ENCODE measurements at regions of chr9 and their contacts with region 1.

Region 1: DNA sequence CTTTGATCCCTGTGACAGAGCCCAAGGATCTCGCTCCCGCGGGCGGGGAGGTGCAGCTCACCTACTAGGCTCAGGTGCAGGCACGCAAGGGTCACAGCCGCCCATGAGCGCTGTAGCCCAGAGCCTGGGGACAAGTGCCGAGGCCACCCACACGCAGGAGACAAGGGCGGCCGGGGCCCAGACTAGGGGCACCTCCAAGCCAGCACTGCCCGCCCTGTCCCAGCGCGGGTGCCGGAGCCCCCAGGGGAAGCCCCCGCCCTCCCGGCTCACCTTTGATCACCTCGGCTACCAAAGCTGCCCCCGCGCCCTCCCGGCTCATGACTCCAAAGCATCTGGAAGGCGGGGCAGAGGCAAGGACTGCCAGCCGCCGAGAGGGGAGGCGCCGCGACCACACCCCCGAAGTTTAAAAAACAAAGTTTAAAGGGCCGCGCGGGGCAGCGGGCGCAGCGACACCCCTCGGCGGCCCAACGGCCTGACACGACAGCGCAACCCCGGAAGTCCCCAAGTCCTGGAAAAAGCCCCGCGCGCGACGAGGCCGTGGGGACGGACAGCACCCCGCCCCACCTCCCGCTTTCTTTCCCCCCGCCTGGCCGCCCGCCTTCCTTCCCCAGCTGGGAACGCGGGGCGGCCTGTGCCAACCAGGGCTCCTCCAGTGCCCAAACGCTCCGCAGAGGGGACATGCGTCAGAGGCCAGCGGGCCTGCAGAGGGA is 53.0 kb downstream of the CDC14B start:
- DNase-seq: peak; percentile 67
- H3K4me3 Mint-ChIP-seq: peak overlapping the region; percentile 79
- H3K27ac Mint-ChIP-seq: peak overlapping the region; percentile 72
- H3K4me1 Mint-ChIP-seq: peaks cover 26% of the 10 kb centered on the region
- H3K27me3 Mint-ChIP-seq: peaks cover 14% of the 10 kb centered on the region

Region 2: DNA sequence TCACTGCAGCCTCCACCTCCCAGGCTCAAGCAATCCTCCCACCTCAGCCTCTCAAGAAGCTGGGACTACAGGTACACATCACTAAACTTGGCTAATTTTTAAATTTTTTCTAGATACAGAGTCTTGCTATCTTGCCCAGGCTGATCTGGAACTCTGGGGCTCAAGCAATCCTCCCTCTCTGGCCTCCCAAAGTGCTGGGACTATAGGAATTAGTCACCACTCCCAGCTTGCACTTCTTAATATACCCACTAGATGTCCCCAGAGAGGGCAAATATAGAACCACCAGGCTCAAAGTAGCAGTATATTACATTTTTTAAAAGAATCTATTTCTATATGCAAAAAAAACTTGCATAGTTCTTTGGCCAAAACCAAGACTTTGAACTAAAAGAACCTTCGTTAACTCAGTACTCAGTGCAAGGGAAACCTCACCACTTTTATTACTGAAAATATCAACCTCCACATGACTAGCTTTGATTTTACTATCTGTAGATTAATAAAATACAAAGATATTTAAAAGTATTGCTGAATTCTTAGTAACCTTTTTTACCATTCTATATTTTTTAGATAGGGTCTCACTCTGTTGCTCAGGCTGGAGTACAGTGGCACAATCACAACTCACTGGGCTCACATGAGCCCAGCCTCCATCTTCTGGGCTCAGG is 238.8 kb before region 1 on chr9:
- intact Hi-C with region 1: loop called (anchors 2 kb)
- DNase-seq: peak; percentile 6
- H3K4me3 Mint-ChIP-seq: no peak overlapping the region
- H3K27ac Mint-ChIP-seq: no peak overlapping the region
- H3K4me1 Mint-ChIP-seq: no peaks in the 10 kb centered on the region
- H3K27me3 Mint-ChIP-seq: peaks cover 5% of the 10 kb centered on the region

Region 3: DNA sequence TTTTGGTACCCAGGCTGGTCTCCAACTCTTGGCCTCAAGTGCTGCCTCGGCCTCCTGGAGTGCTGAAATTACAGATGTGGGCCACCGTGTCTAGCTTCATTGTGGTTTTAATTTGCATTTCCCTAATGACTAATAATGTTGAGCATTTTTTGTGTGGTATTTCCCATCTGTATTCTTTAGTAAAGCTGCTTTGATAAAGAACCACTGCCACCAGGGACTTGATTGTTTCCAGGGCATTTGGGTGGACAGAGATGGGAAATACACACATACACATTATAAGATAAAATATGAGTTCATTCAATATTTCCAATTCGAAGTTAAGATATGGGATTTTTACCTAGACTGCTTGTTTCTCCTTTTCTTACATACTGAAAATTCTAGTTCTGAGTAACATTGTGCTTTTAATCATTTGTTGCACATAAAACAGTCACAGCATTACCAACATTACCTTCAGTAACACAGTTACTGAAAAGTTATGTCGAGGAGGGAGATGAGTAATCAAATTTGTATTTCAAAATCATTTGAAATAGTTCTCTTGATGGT is 87.8 kb before region 1 on chr9:
- intact Hi-C with region 1: loop called (anchors 1 kb)
- DNase-seq: no peak
- H3K4me3 Mint-ChIP-seq: no peak overlapping the region
- H3K27ac Mint-ChIP-seq: peak overlapping the region; percentile 50
- H3K4me1 Mint-ChIP-seq: peaks cover 19% of the 10 kb centered on the region
- H3K27me3 Mint-ChIP-seq: no peaks in the 10 kb centered on the region

Region 4: DNA sequence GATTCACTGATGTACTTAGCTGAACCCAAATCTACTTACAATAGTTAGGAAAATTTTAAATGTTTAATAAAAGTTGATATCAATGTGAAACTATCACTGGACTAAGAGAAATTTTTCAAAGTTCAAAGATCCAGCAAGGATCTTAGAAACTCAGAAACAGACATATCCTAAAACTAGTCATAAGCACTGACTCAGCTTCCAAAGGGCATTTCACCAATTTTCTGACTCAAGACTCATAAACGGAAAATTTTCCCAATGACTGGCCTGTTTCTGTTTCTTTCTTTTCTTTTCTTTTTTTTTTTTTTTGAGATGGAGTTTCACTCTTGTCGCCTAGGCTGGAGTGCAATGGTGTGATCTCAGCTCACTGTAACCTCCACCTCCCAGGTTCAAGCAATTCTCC is 13.6 kb before region 1 on chr9:
- intact Hi-C with region 1: loop called (anchors 1 kb)
- DNase-seq: no peak
- H3K4me3 Mint-ChIP-seq: no peak overlapping the region
- H3K27ac Mint-ChIP-seq: no peak overlapping the region
- H3K4me1 Mint-ChIP-seq: peaks cover 39% of the 10 kb centered on the region
- H3K27me3 Mint-ChIP-seq: peaks cover 5% of the 10 kb centered on the region

Region 5: GRCh38 chr9:96654443-96655197 is 88.0 kb after region 1 on chr9:
- intact Hi-C with region 1: loop called (anchors 2 kb)
- DNase-seq: peak; percentile 50
- H3K4me3 Mint-ChIP-seq: peak overlapping the region; percentile 88
- H3K27ac Mint-ChIP-seq: peak overlapping the region; percentile 72
- H3K4me1 Mint-ChIP-seq: peaks cover 11% of the 10 kb centered on the region
- H3K27me3 Mint-ChIP-seq: peaks cover 6% of the 10 kb centered on the region

Region 6: DNA sequence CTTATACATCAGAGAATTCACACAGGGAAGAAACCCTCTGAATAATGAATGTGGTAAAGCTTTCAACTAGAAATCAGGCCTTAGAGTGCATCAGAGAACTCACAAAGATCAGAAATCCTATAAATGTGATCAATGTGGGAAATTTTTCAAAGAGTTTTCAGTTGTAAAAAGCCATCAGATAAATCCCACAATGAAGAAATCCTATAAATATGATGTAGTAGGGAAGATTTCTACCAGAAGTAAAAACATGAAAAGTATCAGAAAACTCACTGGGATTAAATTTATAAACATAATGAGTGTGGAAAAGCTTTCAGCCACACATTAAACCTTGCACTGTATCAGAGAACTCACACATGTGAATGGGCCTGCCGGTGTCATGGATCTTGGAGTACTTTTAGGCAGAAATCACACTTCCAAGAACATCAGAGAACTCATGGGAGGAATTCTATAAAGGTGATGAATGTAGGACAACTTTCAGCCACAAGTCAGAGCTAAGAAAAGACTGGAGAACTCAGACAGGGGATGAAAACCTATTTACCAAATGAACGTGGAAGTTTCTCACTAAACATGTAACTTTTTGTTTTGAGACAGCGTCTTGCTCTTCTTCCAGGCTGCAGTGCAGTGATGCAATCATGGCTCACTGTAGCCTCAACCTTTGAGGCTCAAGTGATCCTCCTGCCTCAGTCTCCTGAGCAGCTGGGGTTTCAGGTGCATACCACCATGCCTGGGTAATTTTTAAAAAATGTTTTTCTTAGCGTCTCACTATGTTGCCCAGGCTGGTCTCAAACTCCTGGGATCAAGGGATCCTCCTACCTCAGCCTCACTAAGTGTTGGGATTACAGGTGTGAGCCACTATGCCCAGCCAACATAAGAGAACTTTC is 171.7 kb after region 1 on chr9:
- intact Hi-C with region 1: no loop called
- DNase-seq: no peak
- H3K4me3 Mint-ChIP-seq: no peak overlapping the region
- H3K27ac Mint-ChIP-seq: no peak overlapping the region
- H3K4me1 Mint-ChIP-seq: no peaks in the 10 kb centered on the region
- H3K27me3 Mint-ChIP-seq: no peaks in the 10 kb centered on the region

Region 7: DNA sequence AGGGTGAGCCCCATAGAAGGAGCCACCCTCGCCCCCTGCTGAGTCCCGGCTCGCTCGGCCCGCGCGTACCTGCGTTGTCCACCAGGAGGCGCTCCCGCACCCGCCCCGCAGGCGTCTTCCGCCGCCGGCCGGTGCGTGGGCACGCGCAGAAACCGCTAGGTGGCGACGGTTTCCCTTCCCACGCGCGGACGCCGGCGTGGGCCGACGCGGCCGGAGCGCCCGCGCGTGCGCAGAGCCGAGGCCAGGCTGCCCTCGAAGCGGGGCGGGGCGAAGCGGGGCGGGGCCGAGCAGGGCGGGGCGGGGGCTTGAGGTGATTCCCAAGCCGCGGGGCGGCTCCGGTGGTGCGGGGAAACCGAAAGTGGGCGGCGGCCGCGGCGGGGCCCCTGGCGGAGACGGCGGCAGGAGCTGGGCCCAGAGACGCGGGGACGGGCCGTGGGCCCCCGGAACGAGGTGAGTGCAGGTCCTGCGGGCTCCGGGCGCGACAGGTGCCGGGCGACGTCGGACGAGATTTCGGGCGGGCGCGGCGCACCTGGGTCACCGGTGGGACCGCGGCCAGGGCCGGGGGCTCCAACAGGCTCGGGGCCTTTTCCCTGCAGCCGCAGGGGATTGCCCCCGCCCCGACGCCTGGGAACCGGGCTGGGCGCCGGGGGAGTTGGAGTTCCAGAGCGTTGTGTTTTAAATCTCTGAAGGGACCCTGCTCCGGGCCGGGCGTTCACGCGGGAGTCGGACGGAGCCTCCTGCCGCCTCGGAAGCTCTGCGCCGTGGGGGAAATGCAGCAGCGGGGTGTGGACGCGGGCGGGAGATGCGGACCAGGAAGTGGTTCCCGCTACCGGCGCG is 845.4 kb after region 1 on chr9 and contains the start of gene TDRD7:
- intact Hi-C with region 1: loop called (anchors 5 kb)
- DNase-seq: peak; percentile 87
- H3K4me3 Mint-ChIP-seq: peak within 1 kb of the TSS; percentile 84
- H3K27ac Mint-ChIP-seq: peak within 1 kb of the TSS; percentile 61
- H3K4me1 Mint-ChIP-seq: peaks cover 35% of the 10 kb centered on the region
- H3K27me3 Mint-ChIP-seq: peaks cover 34% of the 10 kb centered on the region
- total RNA-seq, gene TDRD7: 4.7 TPM in 2 replicates